ENCODE measurements at regions of chr13 and their contacts with region 1.

Region 1: GRCh38 chr13:69178000-69178399 is 929.6 kb upstream of the ATXN8OS start:
- DNase-seq: no peak
- ATAC-seq: no peak
- H3K4me3 ChIP-seq: no peak overlapping the region
- H3K27ac ChIP-seq: no peak overlapping the region
- H3K4me1 ChIP-seq: no peaks in the 10 kb centered on the region
- H3K27me3 ChIP-seq: no peaks in the 10 kb centered on the region
- CTCF ChIP-seq: no peak
- POLR2A ChIP-seq: no peak

Region 2: DNA sequence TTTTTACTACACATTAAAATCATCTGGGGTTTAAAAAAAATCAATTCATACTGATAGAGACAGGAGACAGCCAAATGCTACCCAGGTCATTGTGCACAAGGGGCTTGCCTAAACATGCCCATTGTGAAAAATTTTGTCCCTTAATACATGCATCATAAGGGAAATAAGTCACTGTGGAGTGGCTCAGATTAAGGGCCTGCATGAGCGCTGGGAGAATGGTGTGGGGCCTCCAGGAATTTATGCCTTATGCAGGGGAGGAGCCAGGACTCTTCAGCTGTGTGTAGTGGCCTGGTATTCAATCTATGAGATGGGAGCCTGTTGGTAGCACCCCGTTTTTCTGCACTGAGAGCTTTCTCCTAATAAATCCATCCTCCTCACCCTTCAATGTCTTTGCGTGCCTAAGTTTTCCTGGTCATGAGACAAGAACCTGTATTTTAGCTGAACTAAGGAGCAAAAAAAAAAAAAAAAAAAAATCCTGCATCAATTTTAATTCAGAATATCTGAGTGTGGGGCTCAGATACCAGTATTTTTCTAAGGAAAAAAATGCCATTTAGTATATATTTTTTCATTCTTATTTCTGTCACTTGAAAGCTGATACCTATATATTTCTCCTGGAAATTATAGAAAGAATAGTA is 68.0 kb before region 1 on chr13:
- in situ Hi-C with region 1: loop called in 1 of 4 experiments (anchors 10 kb)
- intact Hi-C with region 1: no loop called
- DNase-seq: no peak
- ATAC-seq: no peak
- H3K4me3 ChIP-seq: no peak overlapping the region
- H3K27ac ChIP-seq: no peak overlapping the region
- H3K4me1 ChIP-seq: no peaks in the 10 kb centered on the region
- H3K27me3 ChIP-seq: no peaks in the 10 kb centered on the region
- CTCF ChIP-seq: no peak
- POLR2A ChIP-seq: no peak